ENCODE measurements at regions of chr3 and their contacts with region 1.

Region 1: GRCh38 chr3:146544002-146544928 is at the start of gene PLSCR1:
- DNase-seq: peak; percentile 65
- ATAC-seq: peak; percentile 85
- H3K4me3 ChIP-seq: peak within 1 kb of the TSS; percentile 89
- H3K27ac ChIP-seq: peak within 1 kb of the TSS; percentile 69
- H3K4me1 ChIP-seq: no peaks in the 10 kb centered on the region; the same call in 1 of the 2 replicates
- H3K27me3 ChIP-seq: no peaks in the 10 kb centered on the region
- CTCF ChIP-seq: no peak
- EP300 ChIP-seq: 0 out of 4 replicates have a peak, but pooled peaks of 1 of the 2 experiments have one; percentile 25
- POLR2A ChIP-seq: peak; percentile 75
- RAD21 ChIP-seq: no peak
- polyA plus RNA-seq, gene PLSCR1: 40.2 to 60.3 TPM

Region 2: GRCh38 chr3:146350852-146351251 is 193.4 kb before region 1 on chr3:
- CTCF ChIA-PET with region 1: no interaction called
- POLR2A ChIA-PET with region 1: no interaction called
- RAD21 ChIA-PET with region 1: no interaction called
- SMC1A ChIA-PET with region 1: no interaction called
- in situ Hi-C with region 1: no loop called
- intact Hi-C with region 1: no loop called
- DNase-seq: no peak
- ATAC-seq: no peak
- H3K4me3 ChIP-seq: no peak overlapping the region
- H3K27ac ChIP-seq: no peak overlapping the region
- H3K4me1 ChIP-seq: no peaks in the 10 kb centered on the region
- H3K27me3 ChIP-seq: no peaks in the 10 kb centered on the region
- CTCF ChIP-seq: no peak
- EP300 ChIP-seq: no peak
- POLR2A ChIP-seq: no peak
- RAD21 ChIP-seq: no peak

Region 3: GRCh38 chr3:146469150-146470017 is 74.9 kb before region 1 on chr3 and contains the start of gene PLSCR2:
- CTCF ChIA-PET with region 1: no interaction called
- POLR2A ChIA-PET with region 1: no interaction called
- RAD21 ChIA-PET with region 1: no interaction called
- SMC1A ChIA-PET with region 1: interaction called, 9 read pairs
- in situ Hi-C with region 1: no loop called
- intact Hi-C with region 1: loop called (anchors 5 kb)
- DNase-seq: peak; percentile 8
- ATAC-seq: peak; percentile 95
- H3K4me3 ChIP-seq: peak within 1 kb of the TSS; percentile 52; the same call in 1 of the 2 replicates
- H3K27ac ChIP-seq: no peak within 1 kb of the TSS
- H3K4me1 ChIP-seq: peaks cover 4% of the 10 kb centered on the region; the same call in 1 of the 2 replicates
- H3K27me3 ChIP-seq: no peaks in the 10 kb centered on the region
- CTCF ChIP-seq: no peak
- EP300 ChIP-seq: no peak
- POLR2A ChIP-seq: peak; percentile 70
- RAD21 ChIP-seq: no peak
- polyA plus RNA-seq, gene PLSCR2: not detected

Region 4: DNA sequence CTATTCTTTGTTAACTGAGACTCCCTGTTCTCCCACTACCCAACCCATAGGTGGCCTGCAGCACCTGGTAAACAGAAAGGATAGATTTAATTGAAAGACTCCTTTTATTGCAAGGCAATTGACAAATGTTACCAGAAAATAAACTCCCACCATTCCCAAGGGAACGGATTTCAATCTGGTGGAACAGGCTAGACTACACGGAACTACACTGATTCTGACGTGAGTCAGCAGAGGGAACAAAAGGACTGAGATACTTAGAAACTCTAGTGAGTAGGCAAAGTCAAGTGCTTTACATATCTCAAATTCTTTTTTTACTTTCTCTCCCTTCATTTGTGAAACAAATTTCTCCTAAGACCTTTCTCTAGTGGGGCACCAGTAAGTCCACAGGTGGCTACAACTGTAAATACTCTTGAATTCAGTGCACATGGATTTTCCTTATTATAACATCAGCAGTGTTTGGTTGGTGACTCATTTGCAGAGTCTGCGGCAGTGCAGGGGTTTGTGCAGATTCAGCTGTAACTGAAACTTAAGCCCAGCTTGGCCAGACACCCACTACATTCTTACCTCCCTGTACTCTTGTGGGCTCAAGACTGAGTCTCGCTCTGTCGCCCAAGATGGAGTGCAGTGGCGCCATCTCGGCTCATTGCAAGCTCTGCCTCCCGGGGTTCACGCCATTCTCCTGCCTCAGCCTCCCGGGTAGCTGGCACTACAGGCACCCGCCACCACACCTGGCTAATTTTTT is 40.6 kb before region 1 on chr3:
- CTCF ChIA-PET with region 1: no interaction called
- POLR2A ChIA-PET with region 1: interaction called, 4 read pairs
- RAD21 ChIA-PET with region 1: interaction called, 4 read pairs
- SMC1A ChIA-PET with region 1: interaction called, 3 read pairs
- in situ Hi-C with region 1: no loop called
- intact Hi-C with region 1: loop called (anchors 2 kb)
- DNase-seq: peak; percentile 62
- ATAC-seq: peak; percentile 98
- H3K4me3 ChIP-seq: no peak overlapping the region
- H3K27ac ChIP-seq: no peak overlapping the region
- H3K4me1 ChIP-seq: peaks cover 6% of the 10 kb centered on the region; the same call in 1 of the 2 replicates
- H3K27me3 ChIP-seq: no peaks in the 10 kb centered on the region; a peak in 1 of 4 replicates
- CTCF ChIP-seq: 0 out of 6 replicates have a peak, but pooled peaks of 1 of the 3 experiments have one; percentile 11
- EP300 ChIP-seq: peak; percentile 26 to 44; a peak in 2 of 4 replicates
- POLR2A ChIP-seq: no peak
- RAD21 ChIP-seq: 0 out of 2 replicates have a peak, but pooled peaks have one; percentile 8

Region 5: GRCh38 chr3:146517684-146518435 is 26.4 kb before region 1 on chr3:
- CTCF ChIA-PET with region 1: interaction called, 3 read pairs
- POLR2A ChIA-PET with region 1: no interaction called
- RAD21 ChIA-PET with region 1: no interaction called
- SMC1A ChIA-PET with region 1: interaction called, 10 read pairs
- in situ Hi-C with region 1: no loop called
- intact Hi-C with region 1: no loop called
- DNase-seq: no peak
- ATAC-seq: no peak
- H3K4me3 ChIP-seq: no peak overlapping the region
- H3K27ac ChIP-seq: no peak overlapping the region
- H3K4me1 ChIP-seq: no peaks in the 10 kb centered on the region
- H3K27me3 ChIP-seq: no peaks in the 10 kb centered on the region
- CTCF ChIP-seq: no peak
- EP300 ChIP-seq: no peak
- POLR2A ChIP-seq: no peak
- RAD21 ChIP-seq: no peak

Region 6: DNA sequence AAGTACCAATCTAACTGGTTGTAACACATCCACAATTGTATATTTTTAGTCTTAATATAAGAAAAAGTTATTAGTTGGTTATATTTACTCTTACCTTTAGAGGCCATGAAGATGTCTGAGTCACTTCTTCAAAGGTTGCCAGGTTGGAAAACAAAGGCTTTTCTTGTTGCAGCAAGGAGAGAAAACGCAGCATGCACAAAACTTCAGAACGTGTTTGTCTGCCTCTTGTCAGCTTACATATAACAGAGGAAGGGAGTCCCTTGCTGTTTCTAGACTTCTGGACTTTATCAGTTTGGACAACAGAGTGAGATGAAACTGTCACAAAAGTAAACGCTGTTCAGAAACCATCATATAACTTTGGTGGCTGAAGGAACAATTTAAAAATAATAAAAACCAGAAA is 60.8 kb after region 1 on chr3 and contains the start of gene PLSCR5:
- CTCF ChIA-PET with region 1: no interaction called
- POLR2A ChIA-PET with region 1: no interaction called
- RAD21 ChIA-PET with region 1: no interaction called
- SMC1A ChIA-PET with region 1: no interaction called
- in situ Hi-C with region 1: no loop called
- intact Hi-C with region 1: no loop called
- DNase-seq: no peak
- ATAC-seq: no peak
- H3K4me3 ChIP-seq: no peak within 1 kb of the TSS
- H3K27ac ChIP-seq: no peak within 1 kb of the TSS
- H3K4me1 ChIP-seq: no peaks in the 10 kb centered on the region
- H3K27me3 ChIP-seq: no peaks in the 10 kb centered on the region
- CTCF ChIP-seq: no peak
- EP300 ChIP-seq: no peak
- POLR2A ChIP-seq: no peak
- RAD21 ChIP-seq: no peak
- polyA plus RNA-seq, gene PLSCR5: not detected

Measured in GM12878 (cell line).